Activated naive CD4-positive, alpha-beta T cell treated with anti-CD3 and anti-CD28 coated beads for 36 hours (primary cell): ENCODE measurements at regions of chr4 and their contacts with region 1.

Region 1: DNA sequence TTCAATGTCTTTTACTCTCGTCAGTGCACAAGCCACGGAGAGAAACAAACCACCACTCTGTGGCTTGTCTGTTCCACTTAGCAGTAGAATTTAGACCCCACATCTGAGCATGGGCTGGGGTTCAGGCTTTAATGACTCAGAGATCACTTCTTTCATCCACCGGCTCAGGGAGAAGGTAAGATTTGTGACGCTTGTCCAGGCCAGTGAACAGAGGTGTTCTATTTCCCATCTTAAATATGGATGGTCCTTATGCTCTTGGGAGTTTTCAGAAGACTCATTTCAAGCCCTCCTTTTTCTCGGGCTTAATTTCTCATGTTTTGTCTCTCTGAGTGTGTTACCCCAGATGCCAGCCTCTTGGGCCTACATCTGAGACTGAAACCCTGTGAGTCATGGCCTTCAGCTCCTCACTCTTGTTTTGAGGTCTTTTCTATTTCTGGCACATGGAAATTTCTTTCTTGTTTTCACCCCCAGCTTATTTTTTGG is 127.4 kb upstream of the SFRP2 start:
- DNase-seq: peak; percentile 66
- H3K4me3 Mint-ChIP-seq: no peak overlapping the region
- H3K27ac Mint-ChIP-seq: peak overlapping the region; percentile 9
- H3K4me1 Mint-ChIP-seq: peaks cover 16% of the 10 kb centered on the region
- H3K27me3 Mint-ChIP-seq: peaks cover 16% of the 10 kb centered on the region

Region 2: DNA sequence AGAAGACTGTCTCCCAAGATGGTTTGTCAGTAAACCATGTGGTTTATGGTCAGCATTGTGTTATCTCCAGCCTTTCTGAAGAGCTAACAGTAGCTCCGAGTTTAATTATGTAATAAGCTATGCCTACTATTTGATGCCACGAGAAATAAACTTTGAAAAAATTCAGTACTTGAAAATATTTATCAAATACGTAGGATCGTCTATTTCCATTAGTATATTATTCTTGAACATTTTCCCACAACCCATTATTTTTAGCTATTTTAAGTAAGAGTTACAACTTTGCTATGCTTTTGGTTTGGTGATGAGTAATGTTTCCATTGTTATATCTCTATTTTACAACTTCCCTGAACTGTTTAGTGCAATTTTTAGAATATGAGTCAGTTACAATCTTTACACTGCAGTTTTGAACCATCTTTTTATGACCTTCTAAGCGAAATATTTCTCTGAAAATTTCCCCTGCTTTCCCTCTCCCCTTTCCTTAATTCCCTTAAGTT is 756.5 kb before region 1 on chr4:
- CTCF ChIA-PET with region 1: no interaction called
- intact Hi-C with region 1: loop called (anchors 1 kb)
- DNase-seq: no peak
- H3K4me3 Mint-ChIP-seq: no peak overlapping the region
- H3K27ac Mint-ChIP-seq: peak overlapping the region; percentile 90
- H3K4me1 Mint-ChIP-seq: peaks cover 54% of the 10 kb centered on the region
- H3K27me3 Mint-ChIP-seq: no peaks in the 10 kb centered on the region

Region 3: DNA sequence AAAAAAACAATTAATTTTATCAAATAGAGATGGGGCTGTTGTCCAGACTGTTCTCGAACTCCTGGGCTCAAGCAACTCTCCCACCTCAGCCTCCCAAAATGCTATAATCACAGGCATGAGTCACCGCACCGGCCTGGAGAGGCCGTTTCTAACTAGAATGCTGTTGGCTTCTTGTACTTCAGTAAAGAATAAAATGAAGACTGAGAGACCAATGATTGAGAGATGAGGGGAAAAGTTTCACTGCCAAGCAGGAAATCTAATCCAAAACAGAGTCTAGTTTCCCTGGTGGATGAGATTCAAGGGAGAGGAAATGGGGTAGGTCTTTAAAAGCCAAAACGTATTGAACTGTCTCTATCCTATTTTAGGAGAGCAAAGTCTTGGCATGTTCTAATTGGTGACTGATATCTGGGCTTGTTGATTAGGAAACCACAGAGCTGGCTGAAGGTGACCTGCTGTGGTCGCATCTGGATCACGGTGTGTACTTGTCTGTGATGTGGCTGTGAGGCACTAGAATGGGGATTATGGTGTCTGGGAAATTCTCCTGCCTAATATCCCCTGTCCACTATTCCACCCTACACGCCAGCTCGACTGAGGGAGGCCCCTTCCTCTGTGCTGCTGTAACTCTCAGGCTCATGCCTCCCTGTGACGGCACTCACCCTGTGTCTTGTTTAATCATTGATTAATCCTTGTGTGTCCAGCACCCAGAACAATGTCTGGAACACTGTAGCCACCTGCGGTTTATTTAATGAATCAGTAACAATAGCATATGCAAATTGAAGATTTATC is 727.1 kb before region 1 on chr4:
- CTCF ChIA-PET with region 1: no interaction called
- intact Hi-C with region 1: no loop called
- DNase-seq: no peak
- H3K4me3 Mint-ChIP-seq: no peak overlapping the region
- H3K27ac Mint-ChIP-seq: no peak overlapping the region
- H3K4me1 Mint-ChIP-seq: no peaks in the 10 kb centered on the region
- H3K27me3 Mint-ChIP-seq: peaks cover 2% of the 10 kb centered on the region

Region 4: GRCh38 chr4:153809307-153809706 is 107.0 kb before region 1 on chr4:
- CTCF ChIA-PET with region 1: no interaction called
- intact Hi-C with region 1: loop called (anchors 1 kb)
- DNase-seq: peak; percentile 59
- H3K4me3 Mint-ChIP-seq: no peak overlapping the region
- H3K27ac Mint-ChIP-seq: no peak overlapping the region
- H3K4me1 Mint-ChIP-seq: peaks cover 17% of the 10 kb centered on the region
- H3K27me3 Mint-ChIP-seq: no peaks in the 10 kb centered on the region

Region 5: GRCh38 chr4:153950100-153950979 is 34.0 kb after region 1 on chr4:
- CTCF ChIA-PET with region 1: no interaction called
- intact Hi-C with region 1: loop called (anchors 1 kb)
- DNase-seq: peak; percentile 31
- H3K4me3 Mint-ChIP-seq: no peak overlapping the region
- H3K27ac Mint-ChIP-seq: no peak overlapping the region
- H3K4me1 Mint-ChIP-seq: peaks cover 18% of the 10 kb centered on the region
- H3K27me3 Mint-ChIP-seq: peaks cover 11% of the 10 kb centered on the region

Region 6: GRCh38 chr4:154164931-154165839 is 248.9 kb after region 1 on chr4:
- CTCF ChIA-PET with region 1: no interaction called
- intact Hi-C with region 1: loop called (anchors 1 kb)
- DNase-seq: peak; percentile 66
- H3K4me3 Mint-ChIP-seq: no peak overlapping the region
- H3K27ac Mint-ChIP-seq: peak overlapping the region; percentile 48
- H3K4me1 Mint-ChIP-seq: peaks cover 15% of the 10 kb centered on the region
- H3K27me3 Mint-ChIP-seq: peaks cover 13% of the 10 kb centered on the region